HEK293 (cell line): ENCODE measurements at regions of chr1 and their contacts with region 1.

Region 1: DNA sequence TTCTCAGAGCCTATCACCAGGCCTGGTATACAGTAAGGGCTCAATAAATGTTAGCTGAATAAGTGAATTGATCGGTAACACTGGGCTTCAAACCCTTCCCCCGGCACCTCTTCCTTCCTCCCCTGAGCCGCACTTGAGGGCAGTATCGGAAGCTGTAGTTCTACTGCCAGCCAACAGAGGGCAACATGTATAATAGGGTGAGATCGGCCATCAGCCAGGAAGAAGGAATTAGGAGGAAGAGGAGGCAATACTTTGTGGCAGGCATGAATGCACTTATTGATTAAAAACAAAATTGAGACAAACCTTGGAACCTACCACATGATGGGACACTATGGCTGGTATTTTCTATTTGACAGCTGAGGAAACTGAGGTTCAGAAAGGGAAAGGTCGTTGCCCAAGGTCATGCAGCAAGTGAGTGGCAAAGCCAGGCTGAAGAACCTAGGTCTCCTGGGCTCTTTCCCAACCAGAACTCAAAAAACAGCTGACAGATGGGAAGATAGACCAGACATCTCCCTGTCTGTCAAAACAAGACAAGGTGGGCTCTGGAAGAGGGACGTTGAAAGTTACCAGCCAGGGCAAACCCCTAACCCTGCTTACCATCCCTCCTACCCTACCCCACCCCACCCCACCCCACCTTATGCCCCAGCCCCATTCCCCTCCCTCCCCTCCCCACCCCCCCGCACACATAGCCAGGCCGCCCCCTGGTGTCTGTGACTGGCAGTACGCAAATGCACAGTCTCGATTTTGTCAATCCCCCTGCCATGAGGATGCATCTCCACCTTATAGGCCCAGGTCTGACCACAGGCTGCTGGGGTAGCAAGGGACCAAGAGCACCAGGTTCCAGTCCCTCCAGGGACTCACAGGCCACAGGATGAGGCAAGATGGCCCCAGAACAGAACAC is 107.3 kb upstream of the RUNX3 start:
- H3K4me3 ChIP-seq: no peak overlapping the region
- H3K27ac ChIP-seq: no peak overlapping the region
- H3K4me1 ChIP-seq: no peaks in the 10 kb centered on the region
- CTCF ChIP-seq: peak; percentile 45; the same call in 1 of the 2 replicates

Region 2: DNA sequence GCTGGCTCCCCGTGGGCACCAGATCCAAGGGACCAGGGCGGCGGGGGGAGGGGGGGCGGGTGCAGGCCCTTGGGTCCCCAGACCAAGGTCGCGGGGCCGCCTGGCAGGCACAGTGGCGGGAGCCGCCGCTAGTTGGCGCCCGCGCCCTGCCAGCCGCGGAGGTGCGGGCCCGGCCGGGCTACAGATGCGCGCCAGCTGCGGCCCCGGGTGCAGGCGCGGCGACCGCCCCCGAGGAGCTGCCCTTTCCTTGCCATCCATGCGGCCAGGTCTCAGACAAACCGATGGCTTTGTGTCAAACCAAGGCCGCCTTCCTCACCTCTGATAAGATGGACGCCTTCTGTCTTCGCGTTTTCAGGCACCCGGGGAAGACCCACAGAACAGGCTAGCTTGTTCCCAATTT is 105.1 kb before region 1 on chr1:
- CTCF ChIA-PET with region 1: interaction called, 24 read pairs
- POLR2A ChIA-PET with region 1: no interaction called
- H3K4me3 ChIP-seq: no peak overlapping the region
- H3K27ac ChIP-seq: no peak overlapping the region
- H3K4me1 ChIP-seq: peaks cover 3% of the 10 kb centered on the region; the same call in 1 of the 2 replicates
- CTCF ChIP-seq: no peak

Region 3: GRCh38 chr1:25022361-25023189 is 14.8 kb before region 1 on chr1:
- CTCF ChIA-PET with region 1: interaction called, 14 read pairs
- POLR2A ChIA-PET with region 1: interaction called, 3 read pairs
- H3K4me3 ChIP-seq: no peak overlapping the region
- H3K27ac ChIP-seq: peak overlapping the region; percentile 51; the same call in 1 of the 2 replicates
- H3K4me1 ChIP-seq: no peaks in the 10 kb centered on the region; the same call in 1 of the 2 replicates
- CTCF ChIP-seq: no peak

Region 4: DNA sequence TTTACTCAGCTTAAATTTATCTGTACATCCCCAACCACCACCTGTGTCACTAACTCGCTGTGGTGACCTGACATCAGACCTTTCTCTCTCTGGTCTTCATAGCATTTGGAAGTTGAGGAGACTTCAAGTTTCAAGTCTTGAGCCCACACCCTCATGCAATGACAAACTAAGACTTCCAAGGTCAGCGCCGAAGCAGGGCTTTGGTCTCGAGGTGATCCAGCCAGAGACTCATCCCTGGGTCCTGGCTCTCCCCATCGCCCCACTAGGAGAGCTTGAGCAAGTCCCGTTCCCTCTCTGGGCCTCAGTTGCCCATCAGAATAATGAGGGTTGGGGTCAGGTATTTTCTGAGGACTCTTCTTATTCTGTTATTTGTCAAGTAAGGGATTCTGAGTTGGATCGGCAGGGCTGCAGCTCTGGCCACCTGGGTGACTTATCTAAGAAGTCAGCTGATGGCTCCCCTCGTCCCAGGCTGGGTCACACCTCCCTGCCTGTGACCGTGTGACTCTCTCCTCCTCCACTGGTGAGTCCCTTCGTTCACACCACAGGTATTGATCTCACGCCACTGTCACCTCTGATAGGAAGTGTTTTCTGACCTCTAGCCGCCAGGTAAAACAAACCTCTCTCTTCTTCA is 36.3 kb after region 1 on chr1:
- CTCF ChIA-PET with region 1: interaction called, 10 read pairs
- POLR2A ChIA-PET with region 1: no interaction called
- H3K4me3 ChIP-seq: no peak overlapping the region
- H3K27ac ChIP-seq: no peak overlapping the region
- H3K4me1 ChIP-seq: no peaks in the 10 kb centered on the region
- CTCF ChIP-seq: no peak